ENCODE measurements at regions of chr4 and their contacts with region 1.

Region 1: DNA sequence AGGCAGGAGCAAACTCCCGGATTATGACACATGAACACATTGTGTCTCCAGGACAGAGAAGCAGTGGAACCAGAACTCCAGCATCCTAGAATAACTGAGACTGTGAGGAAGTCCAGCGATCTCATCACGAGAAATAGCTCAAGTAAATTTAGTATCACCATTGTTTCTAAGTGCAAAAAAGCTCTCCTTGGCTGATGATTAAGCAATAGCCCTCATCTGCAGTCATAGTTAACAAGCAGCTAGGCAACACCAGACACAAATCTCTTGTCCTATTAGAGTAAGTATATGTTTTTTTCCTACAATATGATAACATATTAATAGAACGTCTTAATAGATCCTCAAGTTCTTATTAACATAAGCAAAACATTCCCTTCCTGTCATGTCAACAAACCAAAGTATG is 2.4 kb upstream of the CFAP299 start:
- DNase-seq: no peak
- H3K4me3 ChIP-seq: no peak overlapping the region
- H3K27ac ChIP-seq: no peak overlapping the region
- H3K4me1 ChIP-seq: peaks cover 11% of the 10 kb centered on the region
- H3K27me3 ChIP-seq: no peaks in the 10 kb centered on the region
- CTCF ChIP-seq: no peak
- POLR2A ChIP-seq: no peak

Region 2: GRCh38 chr4:81516241-81516640 is 1183.1 kb after region 1 on chr4:
- intact Hi-C with region 1: loop called (anchors 5 kb)
- DNase-seq: no peak
- H3K4me3 ChIP-seq: no peak overlapping the region
- H3K27ac ChIP-seq: no peak overlapping the region
- H3K4me1 ChIP-seq: no peaks in the 10 kb centered on the region
- H3K27me3 ChIP-seq: no peaks in the 10 kb centered on the region
- CTCF ChIP-seq: no peak
- POLR2A ChIP-seq: no peak

Measured in vagina (tissue), 2 donors.